PC-9 (cell line): ENCODE measurements at regions of chr3 and their contacts with region 1.

Region 1: DNA sequence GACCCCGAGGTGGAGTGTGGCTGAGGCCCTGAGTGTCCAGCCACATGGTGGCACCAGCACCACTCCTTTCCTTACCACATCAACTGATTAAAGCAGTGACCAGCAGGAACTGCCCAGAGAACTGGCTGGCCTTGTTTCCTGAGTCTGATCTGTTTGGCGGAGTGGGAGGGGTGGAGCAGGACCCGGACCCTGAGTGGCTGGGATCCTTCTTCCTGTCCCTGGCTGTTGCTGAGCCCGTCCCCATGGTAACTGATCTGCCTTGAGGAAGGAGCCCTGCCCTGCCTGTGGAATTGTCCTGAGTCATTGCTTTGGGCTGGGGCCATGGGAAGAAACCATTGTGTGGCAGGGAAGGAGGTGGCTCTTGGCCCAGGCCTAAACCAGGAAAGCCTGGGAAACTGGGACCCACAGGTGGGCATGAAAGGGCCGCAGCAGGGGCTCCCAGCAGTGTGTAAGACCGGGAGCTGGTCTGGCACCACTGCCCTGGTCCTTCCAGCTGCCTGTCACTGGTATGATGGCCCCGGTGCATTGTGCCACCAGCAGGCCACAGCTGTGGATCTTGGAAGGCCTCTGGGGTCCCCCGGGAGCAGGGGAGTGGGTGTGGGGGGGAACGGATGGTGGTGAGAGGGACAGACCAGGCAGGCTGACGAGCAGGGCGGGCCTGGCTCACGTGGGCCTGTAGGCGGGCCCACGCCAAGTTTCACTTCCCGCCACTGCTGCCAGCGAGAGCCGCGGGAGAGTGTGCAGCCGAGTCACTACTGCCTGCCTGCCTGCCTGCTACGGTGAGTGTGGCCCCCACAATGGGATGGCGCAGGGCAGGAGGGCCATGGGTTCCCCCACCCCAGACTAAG is 19.2 kb downstream of the ATRIP start:
- DNase-seq: peak; percentile 98 to 100
- H3K4me3 ChIP-seq: peak overlapping the region; percentile 63
- H3K27ac ChIP-seq: peak overlapping the region; percentile 99
- H3K4me1 ChIP-seq: peaks cover 21% of the 10 kb centered on the region
- H3K27me3 ChIP-seq: no peaks in the 10 kb centered on the region
- CTCF ChIP-seq: peak; percentile 70

Region 2: GRCh38 chr3:48047841-48048456 is 417.8 kb before region 1 on chr3:
- CTCF ChIA-PET with region 1: no interaction called
- POLR2A ChIA-PET with region 1: no interaction called
- intact Hi-C with region 1: no loop called
- DNase-seq: peak; percentile 6 to 41
- H3K4me3 ChIP-seq: no peak overlapping the region
- H3K27ac ChIP-seq: no peak overlapping the region
- H3K4me1 ChIP-seq: no peaks in the 10 kb centered on the region
- H3K27me3 ChIP-seq: no peaks in the 10 kb centered on the region
- CTCF ChIP-seq: no peak

Region 3: GRCh38 chr3:48408823-48409281 is 56.9 kb before region 1 on chr3:
- CTCF ChIA-PET with region 1: no interaction called
- POLR2A ChIA-PET with region 1: no interaction called
- intact Hi-C with region 1: no loop called
- DNase-seq: no peak
- H3K4me3 ChIP-seq: no peak overlapping the region
- H3K27ac ChIP-seq: no peak overlapping the region
- H3K4me1 ChIP-seq: no peaks in the 10 kb centered on the region
- H3K27me3 ChIP-seq: no peaks in the 10 kb centered on the region
- CTCF ChIP-seq: no peak

Region 4: GRCh38 chr3:48543271-48543866 is 77.6 kb after region 1 on chr3:
- CTCF ChIA-PET with region 1: no interaction called
- POLR2A ChIA-PET with region 1: interaction called, 4 read pairs
- intact Hi-C with region 1: loop called (anchors 1 kb)
- DNase-seq: peak; percentile 79 to 83
- H3K4me3 ChIP-seq: no peak overlapping the region
- H3K27ac ChIP-seq: 0 out of 2 replicates have a peak overlapping the region, but pooled peaks have one; percentile 38
- H3K4me1 ChIP-seq: peaks cover 18% of the 10 kb centered on the region
- H3K27me3 ChIP-seq: no peaks in the 10 kb centered on the region
- CTCF ChIP-seq: no peak

Region 5: DNA sequence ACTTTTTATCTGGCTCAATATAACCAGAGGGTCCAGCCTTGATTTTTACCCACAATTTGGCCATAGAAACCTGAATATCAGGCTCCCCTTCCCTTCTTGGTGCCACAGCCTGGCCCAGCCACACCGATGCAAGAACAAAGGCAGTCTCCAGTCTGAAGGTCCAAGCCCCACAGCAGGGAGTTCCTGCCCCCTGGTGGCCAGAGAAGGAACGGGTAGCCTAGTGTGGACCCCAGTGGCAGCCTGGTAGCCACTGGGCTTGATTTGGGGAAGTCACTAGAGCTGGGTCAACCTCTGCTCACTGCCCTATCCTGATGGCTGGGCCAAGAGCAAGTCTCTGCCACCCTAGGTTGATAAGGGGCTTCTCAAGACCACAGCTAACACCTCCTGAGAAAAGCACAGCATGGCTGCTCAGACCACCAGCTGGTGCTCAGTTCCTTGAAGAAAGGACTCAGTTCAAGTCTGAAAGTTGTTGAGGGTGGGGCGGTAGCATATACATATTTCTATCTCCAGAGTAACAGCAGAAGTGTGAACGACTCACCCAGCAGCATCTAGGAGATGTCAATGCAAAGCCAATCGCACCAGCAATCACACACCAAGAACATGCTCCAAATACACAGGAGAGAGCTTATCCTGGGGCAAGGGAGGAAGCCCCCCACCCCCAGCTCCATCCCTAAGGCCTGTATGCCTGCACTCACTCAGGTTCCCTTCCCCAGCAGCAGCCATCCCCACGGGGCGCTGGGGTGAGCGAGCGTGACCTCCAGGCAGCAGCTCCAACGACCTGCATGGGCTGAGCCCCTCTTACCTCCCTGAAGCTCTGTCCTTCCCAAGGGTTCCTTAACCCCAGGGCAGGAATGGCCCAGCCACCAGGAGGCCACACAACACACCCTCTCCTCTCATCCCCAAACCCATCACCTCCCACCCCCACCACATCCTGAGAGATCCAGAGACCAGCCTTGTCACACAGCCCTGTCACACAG is 83.3 kb after region 1 on chr3:
- CTCF ChIA-PET with region 1: interaction called, 10 read pairs
- POLR2A ChIA-PET with region 1: interaction called, 6 read pairs
- intact Hi-C with region 1: loop called (anchors 1 kb)
- DNase-seq: peak; percentile 56 to 84
- H3K4me3 ChIP-seq: no peak overlapping the region
- H3K27ac ChIP-seq: no peak overlapping the region
- H3K4me1 ChIP-seq: 0 out of 2 replicates have a peak, but pooled peaks cover 3% of the 10 kb centered on the region
- H3K27me3 ChIP-seq: no peaks in the 10 kb centered on the region
- CTCF ChIP-seq: peak; percentile 90

Region 6: GRCh38 chr3:48595526-48596121 is 129.9 kb after region 1 on chr3:
- CTCF ChIA-PET with region 1: no interaction called
- POLR2A ChIA-PET with region 1: no interaction called
- intact Hi-C with region 1: loop called (anchors 5 kb)
- DNase-seq: peak; percentile 86 to 98
- H3K4me3 ChIP-seq: peak overlapping the region; percentile 62; the same call in 1 of the 2 replicates
- H3K27ac ChIP-seq: peak overlapping the region; percentile 14
- H3K4me1 ChIP-seq: peaks cover 53% of the 10 kb centered on the region
- H3K27me3 ChIP-seq: no peaks in the 10 kb centered on the region
- CTCF ChIP-seq: no peak

Region 7: DNA sequence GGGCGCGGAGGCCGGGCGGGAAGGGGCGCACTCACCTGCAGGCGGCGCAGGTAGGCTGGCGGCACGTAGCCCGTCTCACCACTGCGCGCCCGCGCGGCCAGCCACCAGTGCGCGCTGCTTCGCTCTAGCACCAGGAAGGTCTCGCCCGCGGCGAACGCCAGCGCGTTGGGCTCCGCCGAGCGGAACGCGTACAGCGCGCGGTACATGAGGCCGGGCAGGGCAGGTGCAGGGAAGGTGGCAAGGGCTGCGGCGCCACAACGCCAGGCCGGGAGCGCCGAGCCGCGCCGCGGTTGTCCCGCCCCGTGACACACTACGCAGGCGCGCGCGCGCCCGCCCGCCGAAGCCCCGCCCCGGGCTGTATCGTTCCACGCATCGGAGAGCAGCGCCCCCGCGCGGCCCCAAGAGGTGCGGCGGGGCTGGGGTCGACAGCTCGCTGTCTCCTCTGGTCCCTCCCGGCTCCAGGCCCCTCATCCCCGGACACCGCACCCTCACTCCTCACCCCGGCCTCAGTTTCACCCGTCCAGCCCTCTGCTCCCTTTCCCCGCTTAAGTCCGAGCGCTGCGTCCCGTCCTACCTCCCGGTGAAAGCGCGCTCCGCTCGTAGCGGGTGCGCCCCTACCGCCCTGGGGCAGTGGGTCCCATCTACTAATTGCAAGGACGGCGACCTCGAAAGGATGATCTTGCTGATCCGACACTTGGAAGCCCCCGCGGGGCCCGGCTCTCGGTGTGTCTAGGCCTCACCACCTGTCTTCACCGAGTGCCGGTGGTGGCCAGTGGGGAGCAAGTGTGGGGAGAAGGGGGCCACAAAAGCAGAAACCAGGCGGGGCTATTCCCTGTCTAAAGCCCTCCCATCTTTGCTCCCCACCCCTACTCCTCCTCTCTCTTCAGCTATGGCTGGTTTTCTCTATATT is 220.1 kb after region 1 on chr3 and contains the start of gene NCKIPSD:
- CTCF ChIA-PET with region 1: no interaction called
- POLR2A ChIA-PET with region 1: no interaction called
- intact Hi-C with region 1: loop called (anchors 1 kb)
- DNase-seq: peak; percentile 52 to 86
- H3K4me3 ChIP-seq: peak within 1 kb of the TSS; percentile 72
- H3K27ac ChIP-seq: peak within 1 kb of the TSS; percentile 46; the same call in 1 of the 2 replicates
- H3K4me1 ChIP-seq: peaks cover 9% of the 10 kb centered on the region
- H3K27me3 ChIP-seq: no peaks in the 10 kb centered on the region
- CTCF ChIP-seq: peak; percentile 72
- total RNA-seq, gene NCKIPSD: 40.0 and 53.3 TPM in 2 replicates